H1 (cell line): ENCODE measurements at regions of chr11 and their contacts with region 1.

Region 1: GRCh38 chr11:15988693-15989231 is 367.6 kb downstream of the SOX6 start:
- DNase-seq: peak; percentile 27 to 73
- H3K4me3 ChIP-seq: peak overlapping the region in 3 of 4 experiments; percentile 2 to 45 (median 37); a peak in 6 of 8 replicates
- H3K27ac ChIP-seq: no peak overlapping the region
- H3K4me1 ChIP-seq: no peaks in the 10 kb centered on the region
- H3K27me3 ChIP-seq: peaks cover 28 to 64% (median 48%) of the 10 kb centered on the region in 4 experiments
- CTCF ChIP-seq: peak; percentile 65 to 80 (median 65)
- EP300 ChIP-seq: no peak
- POLR2A ChIP-seq: no peak
- RAD21 ChIP-seq: peak; percentile 66 to 69

Region 2: DNA sequence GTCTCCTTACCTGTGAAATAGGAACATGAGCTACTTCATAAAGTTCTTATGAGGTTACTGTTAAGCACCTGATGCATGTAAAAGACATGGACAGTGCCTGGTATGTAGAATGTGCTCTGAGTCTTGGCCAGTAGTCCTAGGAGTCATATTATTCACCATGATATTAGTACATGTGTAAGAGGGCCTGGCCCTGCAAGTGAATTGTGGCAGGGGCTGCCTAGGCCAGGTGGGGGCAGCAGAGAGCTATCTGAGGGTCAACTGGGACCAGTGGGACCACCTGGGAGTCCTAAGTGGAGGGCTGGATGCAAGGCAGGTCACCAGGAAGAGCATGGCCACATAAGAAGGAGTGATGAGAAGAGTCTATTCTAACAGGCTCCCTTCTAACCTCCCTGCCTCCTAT is 161.9 kb before region 1 on chr11:
- CTCF ChIA-PET with region 1: interaction called, 10 read pairs
- POLR2A ChIA-PET with region 1: no interaction called
- DNase-seq: peak; percentile 39 to 97
- H3K4me3 ChIP-seq: no peak overlapping the region
- H3K27ac ChIP-seq: no peak overlapping the region
- H3K4me1 ChIP-seq: no peaks in the 10 kb centered on the region
- H3K27me3 ChIP-seq: peaks cover 0 to 3% (median 0%) of the 10 kb centered on the region in 4 experiments; a peak in 1 of 7 replicates
- CTCF ChIP-seq: peak; percentile 88 to 93 (median 89)
- EP300 ChIP-seq: no peak
- POLR2A ChIP-seq: no peak
- RAD21 ChIP-seq: peak; percentile 92

Region 3: DNA sequence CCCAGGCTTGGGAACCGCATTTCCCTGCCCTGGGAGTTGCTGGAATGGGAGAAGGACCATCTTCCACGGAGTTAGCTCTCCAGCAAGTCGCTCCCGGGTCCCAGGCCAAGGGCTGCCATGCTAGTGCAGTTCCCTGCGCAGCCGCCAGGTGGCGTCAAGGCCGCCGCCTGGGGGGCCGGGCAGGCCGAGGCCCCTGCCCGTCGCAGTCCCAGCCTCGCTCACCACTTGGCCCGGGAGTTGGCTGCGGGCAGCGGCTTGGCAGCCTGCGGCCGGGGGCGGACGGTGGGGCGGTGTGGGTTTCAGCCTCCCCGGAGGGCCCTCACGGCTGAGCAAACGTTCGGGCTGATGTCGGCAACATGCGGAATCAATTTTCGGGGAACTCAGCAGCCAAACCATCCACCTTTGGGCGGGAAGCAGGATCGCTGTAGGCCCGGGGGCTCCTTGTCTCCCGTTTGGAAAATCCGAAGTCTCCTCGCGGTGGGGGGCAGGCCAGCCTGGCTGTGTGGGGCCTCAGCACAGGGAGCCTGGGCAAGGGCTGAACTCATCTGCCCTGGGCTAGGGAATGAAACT is 47.5 kb before region 1 on chr11:
- CTCF ChIA-PET with region 1: interaction called, 31 read pairs
- POLR2A ChIA-PET with region 1: no interaction called
- DNase-seq: peak; percentile 65 to 94
- H3K4me3 ChIP-seq: no peak overlapping the region; a peak in 1 of 8 replicates
- H3K27ac ChIP-seq: no peak overlapping the region
- H3K4me1 ChIP-seq: no peaks in the 10 kb centered on the region; a peak in 1 of 7 replicates
- H3K27me3 ChIP-seq: peaks cover 0 to 11% (median 8%) of the 10 kb centered on the region in 4 experiments; a peak in 3 of 7 replicates
- CTCF ChIP-seq: peak; percentile 92 to 96 (median 96)
- EP300 ChIP-seq: peak in 1 of 2 experiments; percentile 48; a peak in 1 of 3 replicates
- POLR2A ChIP-seq: no peak
- RAD21 ChIP-seq: peak; percentile 82 to 90

Region 4: DNA sequence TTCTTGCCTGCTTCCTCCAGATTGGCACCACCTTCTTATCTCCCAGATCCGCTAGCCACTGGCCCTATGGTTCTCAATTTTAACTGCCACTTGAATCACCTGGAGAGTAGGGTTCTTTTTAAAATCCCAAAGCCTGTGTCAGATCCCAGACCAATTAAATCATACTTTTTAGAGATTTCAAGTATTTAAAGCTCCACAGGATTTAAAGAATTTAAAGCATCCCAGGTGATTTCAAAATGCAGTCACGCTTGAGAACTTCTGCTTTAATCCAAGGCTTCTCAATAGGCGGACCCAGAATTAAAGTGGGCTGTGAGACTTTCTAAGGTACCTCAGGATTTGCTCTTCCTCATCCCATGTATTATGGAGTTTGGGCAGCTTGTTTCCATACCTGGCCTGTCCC is 32.5 kb before region 1 on chr11:
- CTCF ChIA-PET with region 1: no interaction called
- POLR2A ChIA-PET with region 1: no interaction called
- DNase-seq: no peak
- H3K4me3 ChIP-seq: no peak overlapping the region
- H3K27ac ChIP-seq: no peak overlapping the region
- H3K4me1 ChIP-seq: no peaks in the 10 kb centered on the region
- H3K27me3 ChIP-seq: no peaks in the 10 kb centered on the region
- CTCF ChIP-seq: no peak
- EP300 ChIP-seq: no peak
- POLR2A ChIP-seq: no peak
- RAD21 ChIP-seq: no peak

Region 5: GRCh38 chr11:15969281-15969680 is 19.5 kb before region 1 on chr11:
- CTCF ChIA-PET with region 1: interaction called, 58 read pairs
- POLR2A ChIA-PET with region 1: no interaction called
- DNase-seq: no peak
- H3K4me3 ChIP-seq: no peak overlapping the region
- H3K27ac ChIP-seq: no peak overlapping the region
- H3K4me1 ChIP-seq: peaks cover 0 to 3% (median 1%) of the 10 kb centered on the region in 4 experiments; a peak in 1 of 7 replicates
- H3K27me3 ChIP-seq: peaks cover 0 to 2% (median 0%) of the 10 kb centered on the region in 4 experiments; a peak in 1 of 7 replicates
- CTCF ChIP-seq: no peak
- EP300 ChIP-seq: no peak
- POLR2A ChIP-seq: no peak
- RAD21 ChIP-seq: no peak

Region 6: DNA sequence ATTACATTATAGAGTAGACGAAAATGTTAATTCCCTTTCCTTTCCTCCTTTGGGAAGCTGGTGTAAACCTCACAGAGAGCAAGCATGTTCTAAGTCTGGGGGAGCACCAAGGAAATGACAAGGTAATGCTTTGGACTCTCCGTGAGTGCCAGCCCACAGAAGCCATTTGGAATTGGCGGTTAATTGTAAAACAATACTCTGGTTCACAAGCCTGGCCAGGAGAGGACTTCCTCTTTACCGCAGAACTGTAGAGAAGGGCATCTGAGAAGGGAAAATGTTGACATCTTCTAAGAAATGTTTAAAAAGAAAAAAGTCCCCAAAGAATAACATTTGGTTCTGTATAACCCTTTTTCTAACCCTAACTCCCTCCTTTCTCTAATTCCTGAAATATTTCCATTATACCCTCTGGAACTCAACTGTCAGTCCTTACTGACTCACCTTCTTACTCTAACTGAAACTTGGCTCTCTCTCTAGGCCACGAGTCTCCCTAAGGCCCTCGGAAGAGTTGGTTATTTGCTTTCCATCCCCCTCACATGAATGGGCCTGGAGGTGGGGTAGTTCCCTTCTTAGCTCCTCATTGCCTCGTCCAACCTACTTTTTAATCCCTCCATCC is 12.2 kb before region 1 on chr11:
- CTCF ChIA-PET with region 1: interaction called, 58 read pairs
- POLR2A ChIA-PET with region 1: no interaction called
- DNase-seq: no peak
- H3K4me3 ChIP-seq: no peak overlapping the region
- H3K27ac ChIP-seq: no peak overlapping the region
- H3K4me1 ChIP-seq: no peaks in the 10 kb centered on the region
- H3K27me3 ChIP-seq: peaks cover 0 to 1% (median 0%) of the 10 kb centered on the region in 4 experiments; a peak in 2 of 7 replicates
- CTCF ChIP-seq: no peak
- EP300 ChIP-seq: no peak
- POLR2A ChIP-seq: no peak
- RAD21 ChIP-seq: no peak

Region 7: DNA sequence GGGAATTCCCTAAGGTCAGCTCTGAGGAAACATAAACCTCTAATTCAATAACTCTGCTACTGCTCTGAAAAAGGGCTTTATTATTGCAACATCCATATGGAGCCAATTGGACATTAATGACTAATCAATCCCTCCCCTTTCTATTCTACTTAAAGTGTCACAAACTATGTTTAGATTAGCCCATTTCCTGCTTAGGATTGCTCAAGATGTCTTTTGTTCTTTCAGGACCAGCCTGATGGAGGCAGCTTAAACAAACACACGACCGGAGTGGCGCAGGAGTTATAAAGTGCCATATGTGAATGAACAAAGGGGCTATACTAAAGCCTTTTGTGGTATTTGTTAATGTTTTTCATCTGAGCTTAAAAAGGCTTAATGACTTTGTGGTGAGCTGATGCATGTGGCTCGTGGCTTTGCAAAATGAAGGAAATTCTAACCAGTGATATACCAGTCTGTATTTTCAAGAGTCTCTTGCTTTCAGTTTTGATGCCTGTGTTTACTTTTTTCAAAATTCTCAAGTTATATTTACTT is 13.2 kb after region 1 on chr11:
- CTCF ChIA-PET with region 1: interaction called, 17 read pairs
- POLR2A ChIA-PET with region 1: no interaction called
- DNase-seq: no peak
- H3K4me3 ChIP-seq: no peak overlapping the region
- H3K27ac ChIP-seq: no peak overlapping the region
- H3K4me1 ChIP-seq: no peaks in the 10 kb centered on the region
- H3K27me3 ChIP-seq: peaks cover 0 to 4% (median 0%) of the 10 kb centered on the region in 4 experiments; a peak in 3 of 7 replicates
- CTCF ChIP-seq: no peak
- EP300 ChIP-seq: no peak
- POLR2A ChIP-seq: no peak
- RAD21 ChIP-seq: no peak

Region 8: GRCh38 chr11:16049611-16050010 is 60.8 kb after region 1 on chr11:
- CTCF ChIA-PET with region 1: no interaction called
- POLR2A ChIA-PET with region 1: no interaction called
- DNase-seq: peak in 1 of 2 experiments; percentile 29
- H3K4me3 ChIP-seq: no peak overlapping the region
- H3K27ac ChIP-seq: no peak overlapping the region
- H3K4me1 ChIP-seq: peaks cover 0 to 11% (median 10%) of the 10 kb centered on the region in 4 experiments; a peak in 5 of 7 replicates
- H3K27me3 ChIP-seq: no peaks in the 10 kb centered on the region
- CTCF ChIP-seq: no peak
- EP300 ChIP-seq: no peak
- POLR2A ChIP-seq: no peak
- RAD21 ChIP-seq: no peak

Region 9: DNA sequence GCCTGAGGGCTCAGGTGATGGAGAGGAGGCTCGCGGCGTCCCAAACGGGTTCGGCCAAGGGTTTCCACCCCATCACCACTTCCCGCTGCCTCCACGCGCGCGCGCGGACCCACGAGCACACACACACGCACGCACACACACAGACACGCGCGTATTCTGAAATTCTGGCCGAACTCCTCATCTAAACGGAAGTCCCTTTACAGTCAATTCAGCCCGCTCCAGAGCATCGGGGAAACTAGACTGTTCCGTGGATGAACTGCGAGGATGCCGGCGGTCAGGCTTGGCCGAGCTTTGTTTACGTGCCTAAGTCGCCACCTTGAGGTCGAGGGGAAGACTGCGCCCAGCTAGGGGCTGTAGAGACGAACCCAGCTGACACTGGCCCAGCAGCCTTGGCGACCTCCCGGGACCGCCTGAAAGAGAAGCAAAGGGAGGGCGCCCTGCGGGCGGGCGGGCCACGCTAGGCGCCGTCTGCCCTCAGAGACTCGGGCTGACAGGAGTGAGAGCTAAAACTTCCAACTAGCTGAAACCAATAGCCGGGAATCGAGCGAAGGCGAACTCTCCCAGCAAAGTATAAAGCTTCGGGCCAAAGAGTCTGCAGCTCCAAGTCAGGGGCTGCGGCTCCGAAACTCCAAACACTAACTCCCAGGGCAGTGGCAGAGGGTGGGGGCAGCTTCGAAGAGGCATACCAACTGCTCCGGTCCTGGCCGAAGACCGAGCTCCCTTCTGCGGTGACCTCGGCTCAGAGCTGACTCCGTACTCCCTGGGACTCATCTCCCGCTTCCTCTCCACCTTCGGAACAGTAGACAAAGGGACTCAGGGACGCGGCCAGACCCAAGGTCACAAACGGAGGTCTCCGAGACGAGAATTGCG is 625.0 kb after region 1 on chr11:
- CTCF ChIA-PET with region 1: interaction called, 10 read pairs
- POLR2A ChIA-PET with region 1: no interaction called
- DNase-seq: peak; percentile 85 to 92
- H3K4me3 ChIP-seq: peak overlapping the region; percentile 8 to 65 (median 52); a peak in 7 of 8 replicates
- H3K27ac ChIP-seq: no peak overlapping the region
- H3K4me1 ChIP-seq: peaks cover 0 to 13% (median 4%) of the 10 kb centered on the region in 4 experiments; a peak in 5 of 7 replicates
- H3K27me3 ChIP-seq: peaks cover 46 to 73% (median 65%) of the 10 kb centered on the region in 4 experiments
- CTCF ChIP-seq: peak; percentile 84 to 93 (median 87)
- EP300 ChIP-seq: no peak; a peak in 1 of 3 replicates
- POLR2A ChIP-seq: no peak
- RAD21 ChIP-seq: peak; percentile 92 to 93